ENCODE measurements at regions of chr4 and their contacts with region 1.

Region 1: DNA sequence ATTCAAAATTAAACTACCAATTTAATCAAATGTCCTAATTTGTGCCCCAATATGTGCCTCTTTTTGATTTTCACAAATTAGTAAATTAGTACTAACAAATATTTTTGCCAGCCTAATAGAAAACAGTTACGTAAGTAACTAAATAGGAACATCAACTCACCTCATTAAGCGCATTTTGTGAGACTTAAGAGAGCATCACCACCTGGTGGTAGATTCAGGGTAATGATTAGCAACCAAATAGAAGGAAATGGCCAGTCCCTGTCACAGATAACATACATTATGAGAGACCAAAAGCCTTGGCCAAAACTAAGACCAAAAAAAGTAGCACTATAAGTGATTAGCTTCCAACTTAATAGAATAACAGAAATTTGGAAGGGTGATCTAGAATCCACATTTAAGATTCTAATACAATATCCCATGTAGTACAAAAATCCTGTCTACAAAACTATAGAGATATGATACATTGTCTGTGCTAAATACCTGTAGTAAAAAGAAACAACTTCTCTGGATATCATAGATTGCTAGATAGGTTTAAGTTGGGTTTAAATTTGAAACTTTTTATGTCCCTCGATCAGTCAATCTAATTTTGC is 46.7 kb downstream of the C4orf46 start:
- DNase-seq: peak; percentile 12
- H3K4me3 Mint-ChIP-seq: no peak overlapping the region
- H3K27ac Mint-ChIP-seq: no peak overlapping the region
- H3K4me1 Mint-ChIP-seq: no peaks in the 10 kb centered on the region
- H3K27me3 Mint-ChIP-seq: peaks cover 20% of the 10 kb centered on the region

Region 2: DNA sequence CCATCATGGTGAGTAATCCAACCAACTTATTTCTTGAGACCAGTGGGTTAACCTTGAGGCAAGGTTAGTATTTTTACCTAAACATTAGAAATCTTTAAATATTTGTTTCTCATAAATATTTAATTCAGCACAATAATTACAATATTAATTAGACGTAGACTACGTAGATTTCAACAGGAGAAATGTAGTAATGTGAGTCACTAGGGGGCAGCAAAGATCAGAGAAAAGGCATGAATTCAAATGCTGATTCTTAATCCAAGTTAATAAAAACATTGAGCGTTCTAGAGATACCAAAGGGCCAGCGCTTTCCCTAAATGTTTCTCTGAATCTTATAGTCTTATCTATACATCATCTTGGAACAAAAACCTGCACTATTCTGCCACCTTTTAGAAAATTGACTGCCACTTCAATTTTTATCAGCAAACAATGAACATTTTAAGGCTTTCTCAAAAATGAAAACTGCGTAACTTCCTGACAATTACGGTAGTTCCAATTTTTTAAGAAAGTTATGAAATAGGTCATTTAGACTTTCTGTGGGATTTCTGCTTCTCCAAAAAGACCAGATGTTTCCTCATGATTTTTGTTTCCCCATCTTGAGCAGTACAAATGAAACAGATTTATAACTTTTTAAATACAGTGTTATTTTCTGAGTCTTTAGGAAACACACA is 632.8 kb before region 1 on chr4:
- CTCF ChIA-PET with region 1: no interaction called
- intact Hi-C with region 1: loop called (anchors 5 kb)
- DNase-seq: peak; percentile 32
- H3K4me3 Mint-ChIP-seq: no peak overlapping the region
- H3K27ac Mint-ChIP-seq: no peak overlapping the region
- H3K4me1 Mint-ChIP-seq: no peaks in the 10 kb centered on the region
- H3K27me3 Mint-ChIP-seq: no peaks in the 10 kb centered on the region

Region 3: GRCh38 chr4:158259955-158260575 is 364.9 kb before region 1 on chr4:
- CTCF ChIA-PET with region 1: interaction called, 3 read pairs
- intact Hi-C with region 1: loop called (anchors 1 kb)
- DNase-seq: no peak
- H3K4me3 Mint-ChIP-seq: no peak overlapping the region
- H3K27ac Mint-ChIP-seq: no peak overlapping the region
- H3K4me1 Mint-ChIP-seq: no peaks in the 10 kb centered on the region
- H3K27me3 Mint-ChIP-seq: no peaks in the 10 kb centered on the region

Region 4: GRCh38 chr4:158384407-158384806 is 240.6 kb before region 1 on chr4:
- CTCF ChIA-PET with region 1: no interaction called
- intact Hi-C with region 1: no loop called
- DNase-seq: no peak
- H3K4me3 Mint-ChIP-seq: no peak overlapping the region
- H3K27ac Mint-ChIP-seq: no peak overlapping the region
- H3K4me1 Mint-ChIP-seq: no peaks in the 10 kb centered on the region
- H3K27me3 Mint-ChIP-seq: no peaks in the 10 kb centered on the region

Region 5: DNA sequence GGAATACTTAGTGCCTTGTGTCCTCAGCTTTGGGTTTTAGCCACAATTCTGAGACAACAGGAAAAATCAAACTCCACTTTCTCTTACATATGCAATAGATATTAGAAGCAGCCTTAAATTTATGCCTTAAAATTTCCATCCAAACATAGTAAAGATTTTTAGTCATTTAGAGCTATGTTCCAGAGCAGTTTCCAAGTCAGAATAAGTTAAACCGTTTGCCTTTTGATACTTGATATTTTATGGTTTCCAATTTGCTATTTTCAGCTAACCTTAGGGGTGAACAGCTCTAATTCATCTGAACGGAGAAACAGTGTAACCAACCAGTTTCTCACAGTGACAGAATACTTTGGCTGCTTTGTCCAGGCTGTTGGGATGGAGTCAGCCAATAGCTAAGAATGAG is 229.1 kb before region 1 on chr4:
- CTCF ChIA-PET with region 1: no interaction called
- intact Hi-C with region 1: no loop called
- DNase-seq: no peak
- H3K4me3 Mint-ChIP-seq: no peak overlapping the region
- H3K27ac Mint-ChIP-seq: no peak overlapping the region
- H3K4me1 Mint-ChIP-seq: no peaks in the 10 kb centered on the region
- H3K27me3 Mint-ChIP-seq: peaks cover 2% of the 10 kb centered on the region

Region 6: GRCh38 chr4:158410272-158410671 is 214.7 kb before region 1 on chr4:
- CTCF ChIA-PET with region 1: no interaction called
- intact Hi-C with region 1: loop called (anchors 10 kb)
- DNase-seq: no peak
- H3K4me3 Mint-ChIP-seq: no peak overlapping the region
- H3K27ac Mint-ChIP-seq: no peak overlapping the region
- H3K4me1 Mint-ChIP-seq: no peaks in the 10 kb centered on the region
- H3K27me3 Mint-ChIP-seq: no peaks in the 10 kb centered on the region

Region 7: DNA sequence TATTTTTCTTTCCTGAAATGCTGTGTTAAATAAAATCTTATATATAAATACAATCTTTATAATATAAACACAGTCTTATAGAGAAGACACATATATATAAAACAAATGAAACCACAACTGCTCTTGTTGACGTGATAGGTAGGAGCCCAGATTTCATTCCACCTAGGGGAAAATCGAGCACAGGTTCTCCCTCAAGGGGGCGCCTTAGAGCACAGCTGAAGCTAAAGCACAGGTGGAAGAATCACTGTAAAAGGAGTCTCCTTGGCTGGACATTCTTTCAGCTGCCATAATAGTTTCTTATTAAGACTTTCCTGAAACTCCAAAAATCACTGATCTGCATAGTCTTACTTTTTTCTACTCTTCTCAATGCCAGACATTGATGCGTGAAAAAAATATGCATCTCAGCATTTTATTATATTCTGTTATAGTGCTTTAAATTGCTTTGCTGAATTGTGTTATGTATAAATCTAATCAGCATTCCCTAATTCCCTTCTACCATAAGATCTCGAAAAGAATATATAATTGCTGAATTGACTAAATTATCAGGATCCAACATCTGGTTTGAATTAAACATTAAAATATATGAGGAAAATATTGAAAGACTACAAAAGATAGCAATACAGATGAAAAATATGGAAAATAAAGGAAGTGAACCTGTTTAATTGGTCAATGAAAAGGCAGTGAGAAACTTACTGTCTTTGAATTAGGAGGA is 128.8 kb before region 1 on chr4:
- CTCF ChIA-PET with region 1: interaction called, 3 read pairs
- intact Hi-C with region 1: loop called (anchors 1 kb)
- DNase-seq: peak; percentile 71
- H3K4me3 Mint-ChIP-seq: no peak overlapping the region
- H3K27ac Mint-ChIP-seq: no peak overlapping the region
- H3K4me1 Mint-ChIP-seq: no peaks in the 10 kb centered on the region
- H3K27me3 Mint-ChIP-seq: peaks cover 11% of the 10 kb centered on the region

Region 8: DNA sequence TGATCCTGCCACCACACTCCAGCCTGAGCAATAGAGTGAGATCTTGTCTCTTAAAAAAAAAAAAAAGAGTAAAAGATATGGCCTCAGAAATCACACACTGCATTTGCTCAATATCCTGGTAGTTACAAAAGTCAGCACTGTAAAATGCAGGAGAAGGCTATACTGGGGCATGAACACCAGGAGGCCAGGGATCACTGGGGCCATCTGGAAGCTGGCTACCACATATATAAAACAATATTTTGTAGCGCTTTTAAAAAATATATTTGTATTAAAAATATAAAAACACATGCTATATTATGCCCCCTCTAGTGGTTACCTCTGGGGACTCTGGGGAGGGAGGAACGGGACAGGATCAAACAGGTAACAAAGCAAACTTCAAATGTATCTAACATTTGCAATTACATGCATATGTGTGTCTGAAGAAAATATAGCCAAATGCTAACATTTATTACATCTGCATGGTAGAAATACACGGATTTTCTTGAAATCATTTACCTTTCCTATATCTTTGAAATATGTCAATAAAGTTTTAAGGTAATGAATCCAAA is 42.7 kb after region 1 on chr4:
- CTCF ChIA-PET with region 1: no interaction called
- intact Hi-C with region 1: no loop called
- DNase-seq: peak; percentile 28
- H3K4me3 Mint-ChIP-seq: no peak overlapping the region
- H3K27ac Mint-ChIP-seq: no peak overlapping the region
- H3K4me1 Mint-ChIP-seq: peaks cover 16% of the 10 kb centered on the region
- H3K27me3 Mint-ChIP-seq: no peaks in the 10 kb centered on the region

Region 9: GRCh38 chr4:159016593-159017024 is 391.6 kb after region 1 on chr4:
- CTCF ChIA-PET with region 1: no interaction called
- intact Hi-C with region 1: no loop called
- DNase-seq: no peak
- H3K4me3 Mint-ChIP-seq: no peak overlapping the region
- H3K27ac Mint-ChIP-seq: no peak overlapping the region
- H3K4me1 Mint-ChIP-seq: no peaks in the 10 kb centered on the region
- H3K27me3 Mint-ChIP-seq: peaks cover 6% of the 10 kb centered on the region